Dorsolateral prefrontal cortex (tissue), 120 donors: ENCODE measurements at regions of chr19 and their contacts with region 1.

Region 1: DNA sequence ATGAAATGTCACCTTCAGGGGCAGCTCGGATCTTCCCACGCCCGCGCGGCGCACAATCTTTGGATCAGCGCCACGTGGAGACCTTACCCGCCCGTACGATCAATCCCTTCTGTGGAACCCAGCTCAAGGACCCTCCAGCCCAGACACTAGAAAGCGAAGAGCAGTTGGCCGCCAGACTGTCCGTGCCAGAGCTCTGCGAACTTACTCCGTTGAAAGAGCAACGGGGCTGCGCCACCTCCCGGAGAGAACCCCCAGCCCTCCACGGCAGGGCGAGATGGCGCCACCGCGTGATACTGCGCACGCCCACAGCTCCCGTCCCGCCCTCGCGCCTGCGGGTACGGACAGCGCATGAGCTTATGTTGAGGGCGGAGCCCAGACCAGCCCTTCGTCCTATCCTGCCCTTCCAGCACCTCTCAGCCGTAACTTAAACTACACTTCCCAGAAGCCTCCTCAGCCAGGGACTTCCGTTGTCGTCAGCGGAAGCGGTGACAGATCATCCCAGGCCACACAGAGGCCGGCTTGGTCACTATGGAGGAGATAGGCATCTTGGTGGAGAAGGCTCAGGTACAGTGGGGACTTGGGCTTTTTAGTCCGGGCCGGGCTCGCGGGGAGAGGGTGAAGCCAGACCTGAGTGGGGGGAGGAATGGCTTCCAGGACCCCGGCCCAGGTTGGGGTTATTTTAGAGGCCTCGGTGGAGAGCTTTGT is at the start of gene PSMC4:
- DNase-seq: peak; percentile 96 to 99 (median 98)
- H3K4me3 ChIP-seq: peak within 1 kb of the TSS; percentile 52 to 100 (median 92)
- H3K27ac ChIP-seq: peak within 1 kb of the TSS; percentile 59 to 97 (median 89)
- H3K27me3 ChIP-seq: no peaks in the 10 kb centered on the region
- CTCF ChIP-seq: peak; percentile 54 to 96 (median 84)
- total RNA-seq, gene PSMC4: 48.2 to 109 (median 89.0) TPM

Region 2: GRCh38 chr19:39792999-39793546 is 177.8 kb before region 1 on chr19:
- intact Hi-C with region 1: loop called in 1 of 2 experiments (anchors 2 kb)
- DNase-seq: peak; percentile 6 to 75 (median 62)
- H3K4me3 ChIP-seq: peak overlapping the region; percentile 24 to 71 (median 57)
- H3K27ac ChIP-seq: peak overlapping the region in 3 of 59 donors; percentile 20 to 71 (median 52)
- H3K27me3 ChIP-seq: peaks cover 0 to 4% (median 0%) of the 10 kb centered on the region in 45 donors
- CTCF ChIP-seq: peak; percentile 48 to 93 (median 83)

Region 3: GRCh38 chr19:39833464-39834286 is 137.2 kb before region 1 on chr19 and contains the start of gene DYRK1B:
- intact Hi-C with region 1: loop called in 1 of 2 experiments (anchors 5 kb)
- DNase-seq: peak; percentile 96 to 99 (median 98)
- H3K4me3 ChIP-seq: peak within 1 kb of the TSS; percentile 77 to 100 (median 99)
- H3K27ac ChIP-seq: peak within 1 kb of the TSS; percentile 69 to 99 (median 94)
- H3K27me3 ChIP-seq: no peaks in the 10 kb centered on the region
- CTCF ChIP-seq: peak in 4 of 56 donors; percentile 13 to 30 (median 20)
- total RNA-seq, gene DYRK1B: 19.2 to 46.1 (median 32.8) TPM

Region 4: GRCh38 chr19:39846176-39846677 is 124.6 kb before region 1 on chr19 and contains the start of gene FBL:
- intact Hi-C with region 1: loop called (anchors 2 kb)
- DNase-seq: peak; percentile 91 to 97 (median 94)
- H3K4me3 ChIP-seq: peak within 1 kb of the TSS; percentile 60 to 99 (median 89)
- H3K27ac ChIP-seq: peak within 1 kb of the TSS; percentile 27 to 96 (median 85)
- H3K27me3 ChIP-seq: no peaks in the 10 kb centered on the region
- CTCF ChIP-seq: peak in 32 of 56 donors; percentile 5 to 55 (median 21)
- total RNA-seq, gene FBL: 43.4 to 102 (median 66.4) TPM

Region 5: GRCh38 chr19:39996811-39997594 is 26.2 kb after region 1 on chr19 and contains the start of gene ZNF546:
- intact Hi-C with region 1: loop called (anchors 1 kb)
- DNase-seq: peak; percentile 79 to 95 (median 93)
- H3K4me3 ChIP-seq: peak within 1 kb of the TSS; percentile 40 to 96 (median 84)
- H3K27ac ChIP-seq: peak within 1 kb of the TSS; percentile 48 to 96 (median 89)
- H3K27me3 ChIP-seq: no peaks in the 10 kb centered on the region
- CTCF ChIP-seq: peak in 30 of 56 donors; percentile 5 to 54 (median 25)
- total RNA-seq, gene ZNF546: 5.7 to 28.7 (median 12.8) TPM

Region 6: DNA sequence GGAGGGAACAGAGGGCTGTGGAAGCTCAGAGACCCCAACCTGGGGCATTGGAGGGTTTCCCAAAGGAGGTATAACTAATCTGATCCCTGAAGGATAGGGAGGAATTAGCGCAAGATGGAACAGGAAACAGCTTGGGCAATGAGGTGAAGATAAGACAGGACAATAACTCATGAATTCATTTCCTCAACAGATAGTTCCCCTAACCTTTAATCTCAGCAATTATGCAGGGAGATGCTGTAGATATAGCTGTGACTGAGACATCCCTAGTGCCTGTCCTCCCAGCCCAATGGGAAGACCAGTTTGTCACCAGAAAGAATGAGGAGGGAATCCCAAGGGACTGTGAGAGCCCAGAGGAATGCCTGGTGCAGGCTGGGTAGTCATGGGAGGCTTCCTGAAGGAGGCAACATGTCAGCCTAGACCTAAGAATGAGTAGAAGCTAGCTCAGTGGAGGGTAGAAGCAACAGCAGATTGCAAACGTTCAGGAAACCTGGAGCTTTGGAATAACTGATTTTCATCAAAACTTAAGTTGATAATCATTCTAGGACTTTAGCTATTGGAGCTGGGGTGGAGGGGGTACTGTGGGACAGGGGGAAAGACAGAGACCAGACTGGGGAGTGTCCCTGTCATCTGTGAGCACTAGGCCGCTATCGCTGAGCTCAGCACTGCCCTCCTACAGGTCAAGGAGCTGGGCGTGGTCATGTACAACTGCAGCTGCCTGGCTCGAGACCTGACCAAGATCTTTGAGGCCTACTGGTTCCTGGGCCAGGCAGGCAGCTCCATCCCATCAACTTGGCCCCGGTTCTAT is 400.4 kb after region 1 on chr19:
- intact Hi-C with region 1: no loop called
- DNase-seq: no peak
- H3K4me3 ChIP-seq: no peak overlapping the region
- H3K27ac ChIP-seq: peak overlapping the region in 3 of 59 donors; percentile 15 to 54 (median 44)
- H3K27me3 ChIP-seq: no peaks in the 10 kb centered on the region
- CTCF ChIP-seq: no peak